Activated B cell treated with CpG ODN at 0.5 μM for 24 hours (primary cell): ENCODE measurements at regions of chr17 and their contacts with region 1.

Region 1: GRCh38 chr17:36486204-36487194 is at the start of gene ZNHIT3:
- DNase-seq: peak; percentile 80
- ATAC-seq: peak; percentile 89
- H3K4me3 Mint-ChIP-seq: peak within 1 kb of the TSS; percentile 98
- H3K27ac Mint-ChIP-seq: peak within 1 kb of the TSS; percentile 96
- H3K4me1 Mint-ChIP-seq: peaks cover 60% of the 10 kb centered on the region
- H3K27me3 Mint-ChIP-seq: peaks cover 10% of the 10 kb centered on the region
- CTCF ChIP-seq: no peak
- total RNA-seq, gene ZNHIT3: 35.5 and 37.0 TPM in 2 replicates

Region 2: GRCh38 chr17:35242805-35243560 is 1243.5 kb before region 1 on chr17 and contains the start of gene SLFN5:
- CTCF ChIA-PET with region 1: no interaction called
- POLR2A ChIA-PET with region 1: no interaction called
- intact Hi-C with region 1: loop called (anchors 5 kb)
- DNase-seq: peak; percentile 88
- ATAC-seq: peak; percentile 84
- H3K4me3 Mint-ChIP-seq: peak within 1 kb of the TSS; percentile 97
- H3K27ac Mint-ChIP-seq: peak within 1 kb of the TSS; percentile 94
- H3K4me1 Mint-ChIP-seq: peaks cover 25% of the 10 kb centered on the region
- H3K27me3 Mint-ChIP-seq: no peaks in the 10 kb centered on the region
- CTCF ChIP-seq: no peak
- total RNA-seq, gene SLFN5: 15.2 and 15.3 TPM in 2 replicates

Region 3: GRCh38 chr17:35947156-35947585 is 539.3 kb before region 1 on chr17:
- CTCF ChIA-PET with region 1: no interaction called
- POLR2A ChIA-PET with region 1: no interaction called
- intact Hi-C with region 1: loop called (anchors 5 kb)
- DNase-seq: peak; percentile 32
- ATAC-seq: peak; percentile 98
- H3K4me3 Mint-ChIP-seq: no peak overlapping the region
- H3K27ac Mint-ChIP-seq: no peak overlapping the region
- H3K4me1 Mint-ChIP-seq: no peaks in the 10 kb centered on the region
- H3K27me3 Mint-ChIP-seq: peaks cover 2% of the 10 kb centered on the region
- CTCF ChIP-seq: no peak

Region 4: GRCh38 chr17:36072431-36073121 is 413.9 kb before region 1 on chr17:
- CTCF ChIA-PET with region 1: interaction called, 4 read pairs
- POLR2A ChIA-PET with region 1: no interaction called
- intact Hi-C with region 1: loop called (anchors 5 kb)
- DNase-seq: no peak
- ATAC-seq: peak; percentile 69
- H3K4me3 Mint-ChIP-seq: no peak overlapping the region
- H3K27ac Mint-ChIP-seq: no peak overlapping the region
- H3K4me1 Mint-ChIP-seq: peaks cover 9% of the 10 kb centered on the region
- H3K27me3 Mint-ChIP-seq: peaks cover 4% of the 10 kb centered on the region
- CTCF ChIP-seq: peak; percentile 59

Region 5: DNA sequence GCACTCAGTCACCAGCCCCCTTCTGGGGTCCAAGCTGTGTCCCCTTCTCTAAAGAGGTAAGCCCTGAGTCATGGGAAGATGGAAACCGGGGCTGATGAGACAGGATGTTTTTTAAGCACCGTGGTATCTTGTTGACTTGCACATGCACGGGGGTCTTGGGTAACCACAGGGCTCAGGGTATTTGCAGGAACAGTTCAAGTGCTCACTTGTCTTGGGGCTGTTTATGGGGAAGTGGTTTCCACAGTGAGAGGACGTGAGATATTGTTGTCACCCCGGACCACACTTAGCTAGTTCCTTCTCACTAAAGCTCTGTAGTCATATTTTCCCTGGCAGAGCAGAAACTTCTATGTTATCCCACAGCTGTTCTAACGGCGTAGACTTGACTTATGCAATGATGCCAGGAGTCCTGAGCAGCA is 297.6 kb before region 1 on chr17:
- CTCF ChIA-PET with region 1: no interaction called
- POLR2A ChIA-PET with region 1: no interaction called
- intact Hi-C with region 1: no loop called
- DNase-seq: no peak
- ATAC-seq: peak; percentile 81
- H3K4me3 Mint-ChIP-seq: no peak overlapping the region
- H3K27ac Mint-ChIP-seq: peak overlapping the region; percentile 68
- H3K4me1 Mint-ChIP-seq: peaks cover 17% of the 10 kb centered on the region
- H3K27me3 Mint-ChIP-seq: peaks cover 2% of the 10 kb centered on the region
- CTCF ChIP-seq: no peak

Region 6: GRCh38 chr17:36534840-36535668 is 48.6 kb after region 1 on chr17 and contains the starts of genes MYO19 and PIGW:
- CTCF ChIA-PET with region 1: interaction called, 3 read pairs
- POLR2A ChIA-PET with region 1: interaction called, 27 read pairs
- intact Hi-C with region 1: loop called (anchors 1 kb)
- DNase-seq: peak; percentile 88
- ATAC-seq: peak; percentile 82
- H3K4me3 Mint-ChIP-seq: peak within 1 kb of the TSS; percentile 98
- H3K27ac Mint-ChIP-seq: peak within 1 kb of the TSS; percentile 100
- H3K4me1 Mint-ChIP-seq: peaks cover 20% of the 10 kb centered on the region
- H3K27me3 Mint-ChIP-seq: no peaks in the 10 kb centered on the region
- CTCF ChIP-seq: no peak
- total RNA-seq, gene MYO19: 70.8 and 85.6 TPM in 2 replicates
- total RNA-seq, gene PIGW: 18.2 and 20.7 TPM in 2 replicates

Region 7: DNA sequence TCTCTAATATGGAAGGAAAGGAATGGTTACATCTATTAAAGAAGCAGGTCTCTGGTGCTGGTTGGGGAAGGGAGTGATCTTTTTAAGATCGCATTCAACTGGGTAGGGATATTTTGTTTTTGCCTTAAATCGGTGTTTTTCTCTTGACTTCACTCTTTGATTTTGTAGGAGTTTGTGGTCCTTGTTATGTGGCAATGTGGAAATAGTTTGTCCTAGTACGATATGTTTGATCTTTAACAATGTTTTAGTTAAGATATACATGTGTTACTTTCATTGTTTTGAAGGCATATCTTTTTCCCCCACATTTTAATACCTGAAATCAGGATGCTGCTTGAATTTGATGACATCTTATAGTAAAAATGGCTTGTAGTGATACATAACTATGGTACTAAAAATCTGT is 67.0 kb after region 1 on chr17:
- CTCF ChIA-PET with region 1: no interaction called
- POLR2A ChIA-PET with region 1: no interaction called
- intact Hi-C with region 1: no loop called
- DNase-seq: no peak
- ATAC-seq: no peak
- H3K4me3 Mint-ChIP-seq: no peak overlapping the region
- H3K27ac Mint-ChIP-seq: no peak overlapping the region
- H3K4me1 Mint-ChIP-seq: peaks cover 72% of the 10 kb centered on the region
- H3K27me3 Mint-ChIP-seq: no peaks in the 10 kb centered on the region
- CTCF ChIP-seq: no peak

Region 8: GRCh38 chr17:36601303-36602029 is 115.0 kb after region 1 on chr17 and contains the start of gene MRM1:
- CTCF ChIA-PET with region 1: no interaction called
- POLR2A ChIA-PET with region 1: interaction called, 11 read pairs
- intact Hi-C with region 1: no loop called
- DNase-seq: peak; percentile 84
- ATAC-seq: peak; percentile 90
- H3K4me3 Mint-ChIP-seq: peak within 1 kb of the TSS; percentile 90
- H3K27ac Mint-ChIP-seq: peak within 1 kb of the TSS; percentile 88
- H3K4me1 Mint-ChIP-seq: peaks cover 35% of the 10 kb centered on the region
- H3K27me3 Mint-ChIP-seq: no peaks in the 10 kb centered on the region
- CTCF ChIP-seq: no peak
- total RNA-seq, gene MRM1: 14.3 and 15.6 TPM in 2 replicates